Caco-2 (cell line): ENCODE measurements at regions of chr2 and their contacts with region 1.

Region 1: DNA sequence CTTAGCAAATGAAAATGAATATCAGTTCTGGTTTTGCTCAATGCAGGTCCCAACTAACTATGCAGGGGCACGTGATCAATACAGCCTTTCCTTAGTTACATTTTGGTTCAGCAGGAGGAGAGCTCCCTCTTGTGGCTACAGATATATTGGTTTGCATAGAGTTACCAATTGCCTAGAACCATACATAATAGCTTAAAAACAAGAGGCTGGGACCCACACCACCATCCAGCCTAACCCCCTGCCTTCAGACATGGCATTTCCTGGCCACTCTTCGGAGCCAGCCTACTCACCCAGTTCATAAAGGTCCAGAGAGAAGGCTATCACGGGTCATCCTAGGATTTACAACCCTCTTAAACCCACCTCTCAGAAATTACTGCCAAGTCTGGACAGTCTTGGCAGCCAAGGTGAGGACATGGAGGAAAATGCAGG is 10.5 kb downstream of the CCDC93 start:
- DNase-seq: peak; percentile 45 to 79
- H3K4me3 ChIP-seq: no peak overlapping the region
- H3K4me3 Mint-ChIP-seq: no peak overlapping the region
- H3K27ac Mint-ChIP-seq: no peak overlapping the region
- H3K4me1 ChIP-seq: no peaks in the 10 kb centered on the region
- H3K4me1 Mint-ChIP-seq: no peaks in the 10 kb centered on the region
- H3K27me3 ChIP-seq: no peaks in the 10 kb centered on the region
- H3K27me3 Mint-ChIP-seq: no peaks in the 10 kb centered on the region
- CTCF ChIP-seq: peak; percentile 75 to 85

Region 2: DNA sequence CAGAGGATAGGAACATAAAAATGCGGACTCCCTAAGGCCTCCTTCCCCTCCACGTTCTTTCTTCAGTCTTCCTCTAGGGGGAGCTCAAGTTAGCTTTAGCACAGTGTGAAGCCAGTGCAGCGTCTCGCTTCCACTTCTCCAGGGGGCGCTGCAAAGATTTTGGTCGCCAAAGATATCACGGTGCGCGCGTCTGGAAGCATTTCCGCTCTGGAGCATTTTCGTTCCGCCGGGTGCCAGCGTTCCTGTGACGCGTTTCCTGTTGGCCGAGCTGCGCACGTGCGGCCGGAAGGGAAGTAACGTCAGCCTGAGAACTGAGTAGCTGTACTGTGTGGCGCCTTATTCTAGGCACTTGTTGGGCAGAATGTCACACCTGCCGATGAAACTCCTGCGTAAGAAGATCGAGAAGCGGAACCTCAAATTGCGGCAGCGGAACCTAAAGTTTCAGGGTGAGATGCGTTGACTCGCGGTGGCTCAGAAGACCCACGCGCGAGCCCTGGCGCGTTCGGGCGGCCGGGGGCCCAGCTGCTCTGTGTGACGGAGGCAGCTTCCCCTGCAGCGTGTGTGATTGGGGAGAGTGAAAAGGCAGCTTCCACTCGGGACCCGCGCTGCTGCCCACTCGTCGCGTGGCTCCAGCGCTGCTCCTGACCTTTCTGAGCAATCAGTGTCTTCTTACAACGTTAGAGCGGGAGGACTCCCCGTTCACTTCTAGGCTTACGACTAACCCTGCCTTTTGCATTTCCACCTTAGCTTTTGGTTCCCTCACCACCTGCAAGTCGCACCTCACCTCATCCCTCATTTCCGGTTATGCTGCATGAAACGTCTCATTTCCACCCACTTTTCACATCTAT is 188.8 kb before region 1 on chr2 and contains the start of gene DDX18:
- CTCF ChIA-PET with region 1: interaction called, 61 read pairs
- POLR2A ChIA-PET with region 1: no interaction called
- intact Hi-C with region 1: loop called (anchors 1 kb)
- DNase-seq: peak; percentile 97
- H3K4me3 ChIP-seq: peak within 1 kb of the TSS; percentile 60
- H3K4me3 Mint-ChIP-seq: peak within 1 kb of the TSS; percentile 92
- H3K27ac Mint-ChIP-seq: peak within 1 kb of the TSS; percentile 93
- H3K4me1 ChIP-seq: peaks cover 12% of the 10 kb centered on the region
- H3K4me1 Mint-ChIP-seq: peaks cover 5% of the 10 kb centered on the region
- H3K27me3 ChIP-seq: no peaks in the 10 kb centered on the region
- H3K27me3 Mint-ChIP-seq: no peaks in the 10 kb centered on the region
- CTCF ChIP-seq: peak; percentile 96 to 99
- total RNA-seq, gene DDX18: 99.0 and 103 TPM in 2 replicates

Region 3: DNA sequence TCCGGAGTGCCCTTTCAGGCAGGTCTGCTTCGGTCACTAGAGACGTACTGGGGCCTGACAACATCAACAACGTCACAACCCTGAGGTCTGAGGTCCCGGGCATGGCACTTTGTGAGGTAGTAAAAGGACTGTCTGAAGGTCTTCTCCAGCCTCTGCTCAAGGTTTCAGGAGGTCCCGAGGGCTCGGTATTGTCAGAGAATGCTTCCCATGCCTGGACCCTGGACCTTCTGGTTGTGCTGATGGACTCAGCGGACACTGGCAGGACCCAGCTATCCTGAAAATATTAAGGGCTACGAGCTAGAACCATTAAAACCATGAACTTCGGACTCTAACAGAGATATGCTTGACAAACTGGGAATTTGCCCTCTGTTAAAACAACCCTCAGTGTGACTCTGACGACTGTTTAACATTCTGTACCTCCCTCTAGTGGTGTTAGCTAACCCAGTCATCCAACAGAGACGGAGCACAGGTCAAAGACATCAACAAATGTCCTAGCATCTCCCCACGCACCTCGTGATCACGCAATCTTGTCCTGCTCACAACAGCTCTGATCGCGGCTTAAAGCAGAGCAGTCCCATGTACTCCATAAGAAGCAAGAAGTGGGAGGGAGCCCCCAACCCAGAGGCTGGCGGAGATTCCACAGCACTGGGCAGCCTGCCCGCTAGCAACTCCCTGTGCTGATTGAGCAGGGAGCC is 86.0 kb before region 1 on chr2:
- CTCF ChIA-PET with region 1: no interaction called
- POLR2A ChIA-PET with region 1: no interaction called
- intact Hi-C with region 1: loop called (anchors 1 kb)
- DNase-seq: peak; percentile 42 to 51
- H3K4me3 ChIP-seq: no peak overlapping the region
- H3K4me3 Mint-ChIP-seq: no peak overlapping the region
- H3K27ac Mint-ChIP-seq: no peak overlapping the region
- H3K4me1 ChIP-seq: peaks cover 3% of the 10 kb centered on the region; the same call in 1 of the 2 replicates
- H3K4me1 Mint-ChIP-seq: no peaks in the 10 kb centered on the region
- H3K27me3 ChIP-seq: no peaks in the 10 kb centered on the region
- H3K27me3 Mint-ChIP-seq: no peaks in the 10 kb centered on the region
- CTCF ChIP-seq: peak; percentile 45 to 80

Region 4: GRCh38 chr2:117982376-117983033 is 20.9 kb before region 1 on chr2:
- CTCF ChIA-PET with region 1: interaction called, 6 read pairs
- POLR2A ChIA-PET with region 1: no interaction called
- intact Hi-C with region 1: loop called (anchors 1 kb)
- DNase-seq: peak; percentile 14 to 40
- H3K4me3 ChIP-seq: no peak overlapping the region
- H3K4me3 Mint-ChIP-seq: no peak overlapping the region
- H3K27ac Mint-ChIP-seq: no peak overlapping the region
- H3K4me1 ChIP-seq: peaks cover 17% of the 10 kb centered on the region
- H3K4me1 Mint-ChIP-seq: no peaks in the 10 kb centered on the region
- H3K27me3 ChIP-seq: no peaks in the 10 kb centered on the region
- H3K27me3 Mint-ChIP-seq: no peaks in the 10 kb centered on the region
- CTCF ChIP-seq: peak in 1 of 2 experiments; percentile 18

Region 5: GRCh38 chr2:118013724-118014491 is 10.5 kb after region 1 on chr2 and contains the start of gene CCDC93:
- CTCF ChIA-PET with region 1: interaction called, 15 read pairs
- POLR2A ChIA-PET with region 1: no interaction called
- intact Hi-C with region 1: no loop called
- DNase-seq: peak; percentile 73 to 89
- H3K4me3 ChIP-seq: peak within 1 kb of the TSS; percentile 99
- H3K4me3 Mint-ChIP-seq: peak within 1 kb of the TSS; percentile 95
- H3K27ac Mint-ChIP-seq: peak within 1 kb of the TSS; percentile 40
- H3K4me1 ChIP-seq: peaks cover 4% of the 10 kb centered on the region; the same call in 1 of the 2 replicates
- H3K4me1 Mint-ChIP-seq: peaks cover 7% of the 10 kb centered on the region
- H3K27me3 ChIP-seq: no peaks in the 10 kb centered on the region
- H3K27me3 Mint-ChIP-seq: peaks cover 6% of the 10 kb centered on the region
- CTCF ChIP-seq: no peak
- total RNA-seq, gene CCDC93: 34.7 and 35.4 TPM in 2 replicates